ENCODE measurements at regions of chr2 and their contacts with region 1.

Region 1: GRCh38 chr2:56009758-56010458 is 86.3 kb upstream of the EFEMP1 start:
- DNase-seq: no peak
- H3K4me3 ChIP-seq: no peak overlapping the region
- H3K27ac ChIP-seq: no peak overlapping the region
- H3K4me1 ChIP-seq: peaks cover 0 to 3% of the 10 kb centered on the region in 2 donors
- H3K27me3 ChIP-seq: no peaks in the 10 kb centered on the region
- CTCF ChIP-seq: peak; percentile 42 to 73 (median 54)

Region 2: DNA sequence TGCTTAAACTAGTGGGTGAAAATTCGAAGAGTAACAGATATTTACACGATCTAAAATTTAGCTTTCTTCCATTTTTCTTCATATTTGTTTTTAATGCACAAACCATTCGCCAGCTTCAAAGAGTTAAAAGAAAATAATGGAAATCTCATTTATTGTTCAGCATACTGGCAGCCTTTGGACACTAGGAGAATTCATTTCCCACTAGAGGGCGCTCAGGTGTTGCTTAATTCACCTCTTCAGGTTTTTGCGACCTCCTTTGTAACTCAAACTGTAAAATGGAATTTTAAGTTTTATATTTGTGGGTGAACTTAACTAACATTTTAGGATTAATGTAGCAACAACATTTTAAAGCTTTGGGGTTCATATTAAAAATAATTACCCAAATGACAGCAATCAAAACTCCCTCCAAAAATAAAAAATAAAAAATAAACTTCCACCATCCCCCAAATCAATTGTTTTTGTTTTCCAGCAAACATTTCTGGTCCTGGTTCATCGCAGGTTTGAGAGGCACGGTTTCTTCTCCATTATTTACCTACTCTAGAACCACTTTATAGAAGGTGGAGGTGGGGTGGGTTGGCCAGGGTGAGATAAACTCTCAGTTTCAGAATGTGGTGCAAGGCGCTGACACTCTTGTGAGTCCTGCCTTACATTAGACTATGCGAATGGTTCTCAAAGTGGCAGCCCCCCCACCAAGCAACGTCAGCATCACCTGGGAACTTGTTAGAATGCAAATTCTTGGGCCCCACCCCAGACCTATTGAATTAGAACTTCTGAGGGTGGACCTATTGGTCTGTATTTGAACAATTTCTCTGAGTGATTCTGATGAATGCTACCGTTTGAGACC is 291.5 kb before region 1 on chr2:
- intact Hi-C with region 1: loop called (anchors 1 kb)
- DNase-seq: peak in 1 of 2 donors; percentile 71
- H3K4me3 ChIP-seq: no peak overlapping the region
- H3K27ac ChIP-seq: no peak overlapping the region
- H3K4me1 ChIP-seq: no peaks in the 10 kb centered on the region
- H3K27me3 ChIP-seq: no peaks in the 10 kb centered on the region
- CTCF ChIP-seq: peak; percentile 56 to 81 (median 80)

Region 3: DNA sequence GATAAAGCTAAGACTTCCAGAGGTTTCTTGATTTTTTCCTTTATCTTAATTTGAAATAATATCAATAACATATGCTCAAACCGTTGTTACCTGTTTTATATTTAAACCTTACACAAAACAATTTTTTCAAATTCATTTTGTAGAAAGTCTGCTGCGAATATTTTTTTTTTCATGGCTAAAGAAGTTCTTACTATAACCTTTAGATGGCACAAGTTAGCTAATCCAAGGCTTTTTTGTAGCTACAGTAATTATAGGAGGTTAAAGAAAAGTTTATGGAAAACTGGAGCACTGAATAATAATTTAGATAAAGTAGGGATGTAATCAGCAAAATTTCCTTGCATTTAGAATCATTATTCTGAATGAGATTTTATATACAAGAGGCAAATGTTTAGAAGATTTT is 238.3 kb before region 1 on chr2:
- intact Hi-C with region 1: loop called (anchors 1 kb)
- DNase-seq: no peak
- H3K4me3 ChIP-seq: no peak overlapping the region
- H3K27ac ChIP-seq: no peak overlapping the region
- H3K4me1 ChIP-seq: peaks cover 0 to 3% of the 10 kb centered on the region in 2 donors
- H3K27me3 ChIP-seq: no peaks in the 10 kb centered on the region
- CTCF ChIP-seq: peak; percentile 45 to 87 (median 77)

Region 4: DNA sequence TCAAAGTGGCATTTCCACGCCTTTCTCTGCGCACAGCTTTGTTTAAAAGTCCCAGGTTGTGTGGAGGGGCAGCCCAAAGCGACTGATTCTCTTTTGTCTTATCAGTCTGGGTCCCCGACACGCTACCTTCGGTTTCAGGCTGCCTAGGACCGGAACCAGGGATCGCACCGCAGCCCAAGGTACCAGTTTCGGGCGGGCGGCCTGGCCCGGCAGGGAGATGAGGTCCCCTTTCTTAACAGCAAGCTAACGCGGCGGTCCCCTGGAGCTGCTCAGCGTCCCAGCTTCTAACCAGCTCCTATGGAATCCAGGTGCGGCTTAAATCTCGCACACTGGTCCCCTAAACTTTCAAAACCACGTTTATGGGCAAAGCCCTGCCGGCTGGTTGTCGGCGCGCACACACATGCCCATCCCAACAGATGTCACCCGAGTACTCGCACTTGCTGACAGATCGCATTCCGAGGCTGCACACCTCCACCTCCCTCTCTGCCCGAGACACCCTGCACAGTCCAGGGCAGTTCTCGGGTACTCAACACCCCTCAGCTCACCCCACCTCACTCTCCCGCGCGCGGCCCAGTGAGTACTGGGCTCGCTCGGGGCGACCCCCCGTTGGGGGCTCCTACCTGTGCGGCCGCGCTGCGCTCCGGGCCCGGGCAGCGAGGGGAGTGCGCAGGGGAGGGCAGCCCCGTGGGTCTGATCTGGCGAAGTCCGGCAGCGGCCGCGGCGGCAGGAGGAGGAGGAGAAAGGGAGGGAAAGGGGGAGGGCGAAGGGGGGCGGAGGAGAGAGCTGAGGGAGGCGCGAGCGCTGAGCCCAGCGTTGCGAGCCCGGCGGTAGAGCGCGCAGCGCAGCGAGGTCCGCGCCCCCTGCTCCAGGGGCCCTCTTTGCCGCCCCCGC is 86.6 kb before region 1 on chr2 and contains the start of gene EFEMP1:
- intact Hi-C with region 1: loop called (anchors 2 kb)
- DNase-seq: peak in 1 of 2 donors; percentile 87
- H3K4me3 ChIP-seq: peak within 1 kb of the TSS; percentile 66 to 83
- H3K27ac ChIP-seq: peak within 1 kb of the TSS; percentile 74 to 80
- H3K4me1 ChIP-seq: peaks cover 0 to 6% of the 10 kb centered on the region in 2 donors
- H3K27me3 ChIP-seq: no peaks in the 10 kb centered on the region
- CTCF ChIP-seq: no peak
- total RNA-seq, gene EFEMP1: 1,320 TPM

Region 5: GRCh38 chr2:55966401-55967118 is 43.3 kb before region 1 on chr2:
- intact Hi-C with region 1: loop called (anchors 2 kb)
- DNase-seq: peak in 1 of 2 donors; percentile 84
- H3K4me3 ChIP-seq: peak overlapping the region in 1 of 2 donors; percentile 29
- H3K27ac ChIP-seq: peak overlapping the region; percentile 72 to 74
- H3K4me1 ChIP-seq: peaks cover 7 to 11% of the 10 kb centered on the region in 2 donors
- H3K27me3 ChIP-seq: no peaks in the 10 kb centered on the region
- CTCF ChIP-seq: peak in 1 of 3 experiments; percentile 17

Measured in ascending aorta (tissue), 2 donors.